ENCODE measurements at regions of chr17 and their contacts with region 1.

Region 1: DNA sequence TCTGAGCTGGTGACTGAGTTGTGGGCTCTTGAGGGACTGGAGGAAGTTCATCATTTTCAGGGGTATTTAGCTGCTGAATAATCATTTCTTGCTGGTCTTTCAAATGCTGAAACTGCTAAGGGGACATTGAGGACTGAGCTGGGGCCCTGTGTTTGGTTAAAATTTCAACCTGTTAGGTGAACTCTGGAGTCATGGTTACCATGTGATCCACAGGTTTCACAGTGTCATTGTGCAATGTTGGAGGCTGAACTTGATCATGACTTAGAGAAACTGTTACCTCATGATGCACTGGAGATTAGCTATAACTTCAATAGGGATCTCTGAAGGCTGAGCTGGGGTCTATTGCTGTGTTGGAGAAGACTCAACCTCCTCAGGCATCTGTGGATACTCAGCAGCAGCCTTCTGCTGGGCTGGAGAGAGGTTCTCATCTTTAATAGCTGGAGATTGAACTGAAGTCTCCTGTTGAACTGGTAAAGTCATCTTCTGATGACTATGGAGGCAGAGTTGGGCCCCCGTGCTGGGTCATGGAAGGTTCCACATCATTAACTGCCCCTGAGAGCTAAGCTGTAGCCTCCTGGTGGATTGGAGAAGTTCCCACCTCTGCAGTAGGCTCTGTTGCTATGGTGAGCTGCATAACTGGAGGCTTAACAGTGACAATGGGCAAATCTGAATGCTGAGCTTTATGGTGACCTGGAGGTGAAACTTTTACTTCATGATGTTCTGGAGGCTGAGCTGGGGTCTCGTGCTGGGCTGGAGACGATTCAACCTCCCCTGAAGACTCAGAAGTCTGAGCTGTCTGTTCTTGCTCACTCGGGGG is 15.2 kb downstream of the RDM1 start:
- DNase-seq: no peak
- ATAC-seq: no peak
- H3K4me3 ChIP-seq: no peak overlapping the region
- H3K27ac ChIP-seq: no peak overlapping the region
- H3K4me1 ChIP-seq: peaks cover 0 to 8% (median 0%) of the 10 kb centered on the region in 9 donors
- H3K27me3 ChIP-seq: no peaks in the 10 kb centered on the region
- CTCF ChIP-seq: no peak

Region 2: GRCh38 chr17:34692920-34693319 is 1222.4 kb before region 1 on chr17:
- intact Hi-C with region 1: loop called in 1 of 10 experiments (anchors 5 kb)
- DNase-seq: no peak
- ATAC-seq: no peak
- H3K4me3 ChIP-seq: no peak overlapping the region
- H3K27ac ChIP-seq: no peak overlapping the region
- H3K4me1 ChIP-seq: no peaks in the 10 kb centered on the region
- H3K27me3 ChIP-seq: peaks cover 0 to 11% (median 0%) of the 10 kb centered on the region in 7 donors
- CTCF ChIP-seq: no peak

Region 3: DNA sequence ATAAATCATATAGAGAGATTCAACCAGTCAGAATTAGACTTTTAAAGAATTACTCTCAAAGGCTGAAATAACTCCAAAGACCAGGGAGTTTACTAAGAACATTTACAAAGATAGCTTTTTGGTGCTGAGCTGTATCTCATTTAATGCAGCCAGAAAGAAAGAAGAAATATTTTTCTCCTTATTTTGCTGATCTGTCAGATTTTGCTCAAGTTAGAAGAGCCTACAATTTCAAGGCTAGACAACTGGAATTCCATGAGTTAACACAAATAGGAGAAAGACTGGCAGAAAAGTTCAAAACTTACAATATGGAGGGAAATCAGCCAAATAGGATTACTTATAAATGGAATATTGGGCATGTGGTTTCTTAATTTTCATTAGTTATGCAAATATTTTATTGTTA is 476.9 kb before region 1 on chr17:
- intact Hi-C with region 1: no loop called
- DNase-seq: no peak
- ATAC-seq: no peak
- H3K4me3 ChIP-seq: no peak overlapping the region
- H3K27ac ChIP-seq: no peak overlapping the region
- H3K4me1 ChIP-seq: peaks cover 0 to 12% (median 6%) of the 10 kb centered on the region in 9 donors
- H3K27me3 ChIP-seq: no peaks in the 10 kb centered on the region
- CTCF ChIP-seq: no peak

Region 4: GRCh38 chr17:35841505-35841904 is 73.9 kb before region 1 on chr17:
- intact Hi-C with region 1: no loop called
- DNase-seq: no peak
- ATAC-seq: no peak
- H3K4me3 ChIP-seq: no peak overlapping the region
- H3K27ac ChIP-seq: no peak overlapping the region
- H3K4me1 ChIP-seq: no peaks in the 10 kb centered on the region
- H3K27me3 ChIP-seq: no peaks in the 10 kb centered on the region
- CTCF ChIP-seq: no peak

Region 5: GRCh38 chr17:35953720-35954119 is 38.4 kb after region 1 on chr17:
- intact Hi-C with region 1: no loop called
- DNase-seq: no peak
- ATAC-seq: no peak
- H3K4me3 ChIP-seq: no peak overlapping the region
- H3K27ac ChIP-seq: no peak overlapping the region
- H3K4me1 ChIP-seq: no peaks in the 10 kb centered on the region
- H3K27me3 ChIP-seq: peaks cover 0 to 34% (median 16%) of the 10 kb centered on the region in 7 donors
- CTCF ChIP-seq: no peak

Measured in heart right ventricle (tissue), 16 donors.